Activated CD4-positive, alpha-beta T cell treated with anti-CD3 and anti-CD28 coated beads, Interleukin-2, amount 10 ng/mL, durations not matched to agents 24 days and 14 days (primary cell): ENCODE measurements at regions of chr2 and their contacts with region 1.

Region 1: DNA sequence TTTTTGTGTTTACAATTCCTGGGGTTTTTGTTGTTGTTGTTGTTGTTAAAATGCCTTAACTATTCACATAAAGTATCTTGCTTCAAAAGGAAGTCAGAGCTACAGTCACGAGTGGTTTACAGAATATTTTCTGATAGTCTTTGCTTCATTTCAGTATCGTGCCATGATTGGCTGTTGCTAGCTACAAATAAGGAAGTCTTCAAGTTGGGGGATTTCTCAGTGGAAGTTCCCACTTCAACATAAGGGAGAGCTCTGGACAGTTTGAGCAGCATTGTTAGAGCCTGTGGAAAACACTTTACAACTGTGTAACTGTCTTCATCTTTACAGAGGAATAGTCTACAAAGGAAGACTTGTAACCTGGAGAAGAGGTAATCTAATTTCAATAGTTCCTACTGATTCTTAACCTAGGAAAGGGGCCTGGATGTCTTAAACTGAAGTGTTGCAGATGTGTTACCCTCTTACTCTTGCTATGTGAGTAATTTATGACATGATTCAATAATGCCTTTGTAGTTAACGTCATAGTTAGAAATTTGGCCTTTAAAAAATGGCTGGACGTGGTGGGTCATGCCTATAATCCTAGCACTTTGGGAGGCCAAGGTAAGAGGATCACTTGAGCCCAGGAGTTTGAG is 23.4 kb upstream of the TANK start:
- DNase-seq: peak; percentile 88
- H3K4me3 Mint-ChIP-seq: peak overlapping the region; percentile 89
- H3K27ac Mint-ChIP-seq: peak overlapping the region; percentile 96
- H3K4me1 Mint-ChIP-seq: peaks cover 39% of the 10 kb centered on the region
- H3K27me3 Mint-ChIP-seq: no peaks in the 10 kb centered on the region

Region 2: DNA sequence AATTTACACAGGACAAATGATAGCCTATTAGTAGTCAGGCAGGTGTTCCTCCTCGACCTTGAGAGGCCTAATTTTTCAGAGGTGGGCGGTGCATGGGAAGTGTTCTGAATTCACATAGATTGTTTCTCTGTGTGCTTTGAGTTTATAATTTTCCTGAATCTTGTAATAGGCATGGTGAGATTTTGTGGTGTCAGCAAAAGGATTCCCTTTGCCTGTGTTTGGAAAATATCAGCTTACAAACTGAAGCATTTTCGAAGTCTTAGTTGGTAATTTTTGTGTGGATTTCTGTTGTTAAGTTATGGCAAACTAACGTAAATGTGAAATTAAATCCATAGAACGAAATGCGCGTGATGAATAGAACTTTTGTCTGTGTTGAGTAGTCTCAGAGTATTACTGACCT is 449.2 kb before region 1 on chr2:
- intact Hi-C with region 1: no loop called
- DNase-seq: peak; percentile 13
- H3K4me3 Mint-ChIP-seq: no peak overlapping the region
- H3K27ac Mint-ChIP-seq: no peak overlapping the region
- H3K4me1 Mint-ChIP-seq: no peaks in the 10 kb centered on the region
- H3K27me3 Mint-ChIP-seq: peaks cover 7% of the 10 kb centered on the region

Region 3: GRCh38 chr2:161090411-161090810 is 46.4 kb before region 1 on chr2:
- intact Hi-C with region 1: loop called (anchors 5 kb)
- DNase-seq: peak; percentile 88
- H3K4me3 Mint-ChIP-seq: peak overlapping the region; percentile 69
- H3K27ac Mint-ChIP-seq: peak overlapping the region; percentile 88
- H3K4me1 Mint-ChIP-seq: peaks cover 49% of the 10 kb centered on the region
- H3K27me3 Mint-ChIP-seq: no peaks in the 10 kb centered on the region

Region 4: GRCh38 chr2:161122772-161123530 is 13.9 kb before region 1 on chr2:
- intact Hi-C with region 1: loop called (anchors 1 kb)
- DNase-seq: peak; percentile 69
- H3K4me3 Mint-ChIP-seq: peak overlapping the region; percentile 1
- H3K27ac Mint-ChIP-seq: peak overlapping the region; percentile 42
- H3K4me1 Mint-ChIP-seq: peaks cover 20% of the 10 kb centered on the region
- H3K27me3 Mint-ChIP-seq: no peaks in the 10 kb centered on the region

Region 5: DNA sequence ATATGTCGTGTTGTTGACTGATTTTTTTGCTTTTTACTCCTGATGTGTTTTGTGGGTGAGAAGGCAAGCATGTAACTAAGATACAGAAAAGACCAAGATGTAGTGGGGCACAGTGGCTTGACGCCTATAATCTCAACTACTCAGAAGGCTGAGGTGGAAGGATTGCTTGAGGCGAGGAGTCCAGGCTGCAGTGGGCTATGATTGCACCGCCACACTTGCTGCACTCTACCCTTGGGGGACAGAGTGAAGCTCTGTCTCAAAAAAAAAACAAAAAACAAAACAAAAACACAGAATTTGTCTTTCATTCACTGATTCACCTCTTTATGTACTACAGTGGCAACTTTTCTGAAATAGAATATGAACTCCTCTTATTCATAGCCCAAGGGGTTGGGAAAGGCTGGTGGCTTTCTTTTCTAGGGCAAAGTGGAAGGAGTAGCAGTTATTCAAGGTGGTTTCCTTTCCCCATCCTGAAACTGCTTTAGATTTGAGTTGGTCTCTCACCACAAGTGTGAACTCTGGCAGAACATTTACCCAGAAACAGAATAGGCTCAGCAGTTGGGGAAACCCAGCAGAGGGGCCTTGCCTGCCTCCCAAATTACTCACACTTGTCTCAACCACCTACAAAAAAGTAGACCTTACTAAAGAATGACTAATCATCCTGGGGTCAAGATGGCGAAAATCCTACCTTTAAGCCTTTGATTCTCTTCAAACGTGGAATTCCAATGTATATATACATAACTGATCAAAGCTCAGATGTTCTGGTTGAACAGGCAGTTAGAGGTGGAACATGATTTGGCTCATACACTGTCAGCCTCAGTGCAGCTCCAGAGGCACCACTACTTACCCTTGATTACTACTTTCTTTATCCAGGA is 30.0 kb after region 1 on chr2:
- intact Hi-C with region 1: loop called (anchors 1 kb)
- DNase-seq: peak; percentile 90
- H3K4me3 Mint-ChIP-seq: peak overlapping the region; percentile 69
- H3K27ac Mint-ChIP-seq: peak overlapping the region; percentile 94
- H3K4me1 Mint-ChIP-seq: peaks cover 76% of the 10 kb centered on the region
- H3K27me3 Mint-ChIP-seq: no peaks in the 10 kb centered on the region

Region 6: DNA sequence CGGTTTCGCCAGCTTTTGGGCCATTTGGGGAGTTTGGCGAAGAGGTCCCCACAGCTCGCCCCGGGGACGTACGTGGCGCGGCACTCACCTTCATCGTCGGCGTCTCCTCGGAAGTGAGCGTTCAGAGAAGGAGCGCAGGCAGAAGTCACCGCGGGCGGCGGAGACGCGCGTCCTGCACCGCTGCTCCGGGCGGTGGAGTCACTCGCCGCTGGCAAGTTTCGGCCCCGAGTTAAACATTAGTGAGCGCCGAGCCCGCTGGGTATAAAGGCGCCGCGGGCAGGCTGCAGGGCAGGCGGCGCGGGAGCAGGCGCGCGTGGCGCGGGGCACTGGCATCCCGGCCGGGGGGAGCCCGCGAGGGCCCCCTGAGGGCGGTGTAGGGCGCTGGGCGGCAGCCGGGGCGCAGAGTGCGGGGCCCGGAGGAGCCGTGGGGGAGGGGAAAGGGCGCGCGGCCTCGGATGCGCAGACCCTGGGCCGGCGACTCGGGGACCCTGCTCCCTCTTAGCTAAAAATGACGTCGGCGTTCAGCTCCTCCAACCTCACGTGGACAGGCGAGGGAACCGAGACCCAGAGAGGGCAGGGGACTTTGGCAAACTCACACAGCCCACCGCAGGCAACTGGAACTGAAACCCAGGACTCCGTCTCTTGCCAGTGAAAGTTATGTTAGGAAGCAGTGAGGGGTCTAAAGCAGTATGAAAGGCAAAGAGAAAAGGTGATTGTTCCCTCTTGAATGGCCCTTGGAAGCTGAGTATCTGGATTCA is 937.3 kb after region 1 on chr2 and contains the start of gene DPP4:
- intact Hi-C with region 1: loop called (anchors 10 kb)
- DNase-seq: peak; percentile 89
- H3K4me3 Mint-ChIP-seq: peak within 1 kb of the TSS; percentile 95
- H3K27ac Mint-ChIP-seq: peak within 1 kb of the TSS; percentile 96
- H3K4me1 Mint-ChIP-seq: peaks cover 46% of the 10 kb centered on the region
- H3K27me3 Mint-ChIP-seq: no peaks in the 10 kb centered on the region
- total RNA-seq, gene DPP4: 65.4 and 68.0 TPM in 2 replicates